Transverse colon (tissue), 4 donors: ENCODE measurements at regions of chr5 and their contacts with region 1.

Region 1: DNA sequence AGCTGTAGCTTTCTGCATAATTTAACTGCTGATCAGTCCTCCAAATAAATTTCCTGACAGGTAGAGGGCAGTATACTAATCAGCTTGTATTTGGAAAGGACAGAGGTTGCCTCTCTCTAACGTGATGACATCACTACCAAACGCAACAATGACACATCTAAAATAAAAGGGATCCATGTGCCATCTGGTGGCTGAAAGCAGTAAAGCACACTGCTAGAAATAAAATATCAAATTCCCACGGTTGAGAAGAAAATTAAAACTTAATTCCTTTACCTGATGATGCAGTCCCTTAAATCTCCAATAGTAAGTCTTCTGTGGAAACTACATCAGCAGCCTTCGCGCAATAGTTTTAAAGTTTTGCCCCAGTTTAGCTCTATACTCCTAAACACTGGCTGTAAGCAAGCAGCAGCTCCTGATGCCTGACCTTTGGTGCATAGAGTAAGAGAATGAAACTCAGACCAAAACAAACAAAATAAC is 54.5 kb downstream of the DIAPH1 start:
- DNase-seq: peak; percentile 59
- H3K4me3 ChIP-seq: no peak overlapping the region
- H3K27ac ChIP-seq: peak overlapping the region; percentile 27 to 64 (median 61)
- H3K4me1 ChIP-seq: peaks cover 6 to 24% (median 15%) of the 10 kb centered on the region in 4 donors
- H3K27me3 ChIP-seq: no peaks in the 10 kb centered on the region
- CTCF ChIP-seq: peak; percentile 90 to 99 (median 92)
- EP300 ChIP-seq: no peak
- POLR2A ChIP-seq: no peak

Region 2: DNA sequence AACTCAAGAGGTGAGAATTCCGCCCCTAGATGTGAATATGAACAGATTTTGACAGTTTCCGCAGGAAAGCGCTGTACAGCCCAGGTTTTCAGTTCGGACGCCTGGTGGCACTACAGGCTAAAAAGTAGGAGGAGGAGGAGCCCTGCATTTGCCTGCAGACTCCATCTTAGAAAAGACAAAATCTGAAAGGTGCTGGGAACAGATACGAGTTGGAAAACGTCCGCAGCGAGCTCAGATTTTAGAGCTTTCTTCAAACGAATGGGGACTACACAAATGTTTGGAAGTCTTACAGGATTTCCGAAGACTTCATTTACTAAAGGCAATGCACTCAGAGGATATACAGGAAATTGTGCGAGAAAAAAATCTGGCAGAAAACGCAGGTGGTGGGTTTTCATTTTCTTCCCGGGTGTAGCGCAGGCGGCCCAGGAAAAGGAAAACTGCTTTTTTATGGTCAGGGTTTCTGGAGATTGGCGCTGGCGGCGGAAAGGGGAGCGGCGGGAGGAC is 479.7 kb before region 1 on chr5:
- in situ Hi-C with region 1: loop called in 1 of 4 experiments (anchors 25 kb)
- intact Hi-C with region 1: no loop called
- DNase-seq: peak; percentile 18
- H3K4me3 ChIP-seq: peak overlapping the region in 3 of 4 donors; percentile 21 to 36 (median 29)
- H3K27ac ChIP-seq: peak overlapping the region in 3 of 4 donors; percentile 44 to 67 (median 57)
- H3K4me1 ChIP-seq: no peaks in the 10 kb centered on the region
- H3K27me3 ChIP-seq: peaks cover 4% of the 10 kb centered on the region
- CTCF ChIP-seq: peak in 4 of 5 experiments; percentile 21 to 35 (median 27)
- EP300 ChIP-seq: no peak
- POLR2A ChIP-seq: no peak

Region 3: GRCh38 chr5:141223112-141223783 is 341.0 kb before region 1 on chr5 and contains the start of gene PCDHB14:
- in situ Hi-C with region 1: loop called (anchors 25 kb)
- intact Hi-C with region 1: no loop called
- DNase-seq: no peak
- H3K4me3 ChIP-seq: peak within 1 kb of the TSS in 1 of 4 donors; percentile 28
- H3K27ac ChIP-seq: no peak within 1 kb of the TSS
- H3K4me1 ChIP-seq: peaks cover 0 to 2% (median 0%) of the 10 kb centered on the region in 4 donors
- H3K27me3 ChIP-seq: no peaks in the 10 kb centered on the region
- CTCF ChIP-seq: peak in 2 of 5 experiments; percentile 6 to 16
- EP300 ChIP-seq: no peak
- POLR2A ChIP-seq: no peak
- total RNA-seq, gene PCDHB14: 1.4 to 3.3 (median 2.8) TPM

Region 4: DNA sequence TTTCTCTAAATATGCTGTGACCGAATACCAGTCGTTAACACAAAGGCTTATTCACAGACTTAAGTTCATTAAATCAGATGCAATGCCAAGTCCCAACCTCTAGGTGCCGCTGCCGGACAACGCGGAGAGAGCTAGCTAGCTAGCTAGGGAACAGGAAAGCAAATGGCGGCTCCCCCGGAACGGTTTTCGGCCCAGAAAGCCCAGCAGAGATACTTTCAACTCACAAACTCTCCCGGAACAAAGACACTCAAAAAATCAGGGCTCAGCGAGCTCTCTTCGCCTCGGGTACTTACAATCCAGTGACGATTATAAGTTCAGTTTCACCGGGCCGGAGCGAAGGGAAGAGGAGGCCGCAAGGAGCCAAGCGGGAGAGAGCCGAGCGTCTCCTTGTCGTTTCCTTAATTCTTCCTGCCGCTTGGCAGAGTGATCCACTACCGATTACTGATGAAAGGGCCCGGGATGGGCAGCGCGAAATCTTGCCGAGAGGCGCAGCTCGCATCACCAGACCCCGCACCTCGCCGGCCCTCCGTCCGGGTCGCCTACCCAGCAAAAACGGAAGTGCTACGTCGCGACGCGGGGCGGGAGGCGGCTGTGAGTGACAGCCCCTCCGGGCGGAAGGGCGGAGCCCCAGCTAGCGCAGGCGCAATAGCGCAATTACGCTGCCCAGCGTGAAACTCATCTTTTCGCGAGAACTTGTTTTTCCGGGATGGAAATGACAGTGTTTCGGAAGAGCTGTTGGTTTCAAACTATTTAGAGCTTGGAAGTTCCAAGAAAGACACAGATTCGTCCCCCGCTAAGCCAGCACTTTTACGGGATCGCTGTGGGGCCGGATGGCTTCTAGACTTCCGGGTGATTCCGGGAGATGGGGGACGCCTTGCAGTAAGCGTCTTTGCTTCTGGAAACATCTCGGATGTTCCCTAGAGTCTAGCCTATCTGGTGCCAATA is 243.8 kb before region 1 on chr5 and contains the start of gene TAF7:
- in situ Hi-C with region 1: loop called in 1 of 4 experiments (anchors 25 kb)
- intact Hi-C with region 1: loop called (anchors 10 kb)
- DNase-seq: peak; percentile 92
- H3K4me3 ChIP-seq: peak within 1 kb of the TSS; percentile 32 to 80 (median 62)
- H3K27ac ChIP-seq: peak within 1 kb of the TSS; percentile 87 to 97 (median 92)
- H3K4me1 ChIP-seq: peaks cover 0 to 12% (median 4%) of the 10 kb centered on the region in 4 donors
- H3K27me3 ChIP-seq: no peaks in the 10 kb centered on the region
- CTCF ChIP-seq: peak; percentile 79 to 86 (median 85)
- EP300 ChIP-seq: no peak
- POLR2A ChIP-seq: peak; percentile 95
- total RNA-seq, gene TAF7: 41.9 to 62.5 (median 50.3) TPM

Region 5: GRCh38 chr5:141349917-141350619 is 214.2 kb before region 1 on chr5 and contains the start of gene PCDHGB1:
- in situ Hi-C with region 1: loop called in 1 of 4 experiments (anchors 25 kb)
- intact Hi-C with region 1: no loop called
- DNase-seq: peak; percentile 20
- H3K4me3 ChIP-seq: peak within 1 kb of the TSS in 1 of 4 donors; percentile 33
- H3K27ac ChIP-seq: no peak within 1 kb of the TSS
- H3K4me1 ChIP-seq: no peaks in the 10 kb centered on the region
- H3K27me3 ChIP-seq: peaks cover 15% of the 10 kb centered on the region
- CTCF ChIP-seq: peak in 2 of 5 experiments; percentile 15 to 41
- EP300 ChIP-seq: no peak
- POLR2A ChIP-seq: no peak
- total RNA-seq, gene PCDHGB1: 0.96 to 10.5 (median 3.4) TPM

Region 6: DNA sequence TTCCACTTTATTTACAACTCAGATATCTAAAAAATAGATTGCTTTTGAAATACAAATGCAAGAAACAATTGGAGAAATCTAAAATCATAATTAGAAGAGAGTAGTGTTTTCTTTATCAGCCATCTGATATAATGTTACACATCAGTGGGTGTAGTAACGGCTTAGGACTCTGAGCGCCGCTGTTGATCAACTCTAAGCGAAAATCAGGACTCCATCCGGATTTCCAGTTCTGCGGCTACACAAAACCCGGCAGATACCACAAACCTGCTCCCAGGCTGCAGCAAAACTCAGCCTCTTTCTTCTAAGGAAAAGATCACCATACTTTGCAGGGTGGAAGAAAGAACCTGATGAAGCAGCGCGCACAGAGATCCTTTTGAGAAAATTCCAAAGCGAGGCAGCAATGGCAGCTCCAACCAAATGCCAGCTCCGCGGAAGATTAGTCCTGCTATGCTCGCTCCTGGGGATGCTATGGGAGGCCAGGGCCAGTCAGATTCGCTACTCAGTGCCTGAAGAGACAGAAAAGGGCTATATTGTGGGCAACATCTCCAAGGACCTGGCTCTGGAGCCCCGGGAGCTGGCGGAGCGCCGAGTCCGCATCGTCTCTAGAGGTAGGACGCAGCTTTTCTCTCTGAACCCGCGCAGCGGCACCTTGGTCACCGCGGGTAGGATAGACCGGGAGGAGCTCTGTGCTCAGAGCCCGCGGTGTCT is 161.5 kb before region 1 on chr5 and contains the start of gene PCDHGA9:
- in situ Hi-C with region 1: loop called in 1 of 4 experiments (anchors 10 kb)
- intact Hi-C with region 1: no loop called
- DNase-seq: no peak
- H3K4me3 ChIP-seq: peak within 1 kb of the TSS in 1 of 4 donors; percentile 32
- H3K27ac ChIP-seq: no peak within 1 kb of the TSS
- H3K4me1 ChIP-seq: no peaks in the 10 kb centered on the region
- H3K27me3 ChIP-seq: peaks cover 26% of the 10 kb centered on the region
- CTCF ChIP-seq: peak in 3 of 5 experiments; percentile 12 to 19 (median 19)
- EP300 ChIP-seq: no peak
- POLR2A ChIP-seq: no peak
- total RNA-seq, gene PCDHGA9: 1.2 to 4.6 (median 3.4) TPM

Region 7: DNA sequence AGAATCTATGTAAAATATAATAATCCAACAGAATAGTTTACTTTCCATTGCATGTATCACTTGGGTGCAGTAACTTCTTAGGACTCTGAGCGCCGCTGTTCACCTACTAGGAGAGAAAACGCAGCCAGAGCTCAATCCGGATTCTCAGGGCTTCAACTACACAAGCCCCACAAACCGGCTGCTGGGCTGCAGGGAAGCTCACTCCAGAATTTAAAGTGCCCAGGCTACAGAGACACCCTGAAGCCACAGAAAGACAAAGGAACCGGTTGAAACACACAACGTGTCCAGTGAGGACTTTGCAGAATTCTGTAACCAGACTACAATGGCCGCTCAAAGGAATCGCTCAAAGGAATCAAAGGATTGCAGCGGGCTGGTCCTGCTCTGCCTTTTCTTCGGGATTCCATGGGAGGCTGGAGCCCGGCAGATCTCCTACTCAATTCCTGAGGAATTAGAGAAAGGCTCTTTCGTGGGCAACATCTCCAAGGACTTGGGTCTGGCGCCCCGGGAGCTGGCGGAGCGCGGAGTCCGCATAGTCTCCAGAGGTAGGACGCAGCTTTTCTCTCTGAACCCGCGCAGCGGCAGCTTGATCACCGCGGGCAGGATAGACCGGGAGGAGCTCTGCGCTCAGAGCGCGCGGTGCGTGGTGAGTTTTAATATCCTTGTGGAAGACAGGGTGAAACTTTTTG is 151.3 kb before region 1 on chr5 and contains the start of gene PCDHGA10:
- in situ Hi-C with region 1: loop called in 2 of 4 experiments (anchors 10 kb)
- intact Hi-C with region 1: loop called (anchors 10 kb)
- DNase-seq: peak; percentile 62
- H3K4me3 ChIP-seq: peak within 1 kb of the TSS in 3 of 4 donors; percentile 16 to 44 (median 18)
- H3K27ac ChIP-seq: peak within 1 kb of the TSS in 1 of 4 donors; percentile 2
- H3K4me1 ChIP-seq: no peaks in the 10 kb centered on the region
- H3K27me3 ChIP-seq: peaks cover 8% of the 10 kb centered on the region
- CTCF ChIP-seq: peak; percentile 23 to 54 (median 41)
- EP300 ChIP-seq: no peak
- POLR2A ChIP-seq: no peak
- total RNA-seq, gene PCDHGA10: 4.0 to 6.5 (median 6.1) TPM

Region 8: DNA sequence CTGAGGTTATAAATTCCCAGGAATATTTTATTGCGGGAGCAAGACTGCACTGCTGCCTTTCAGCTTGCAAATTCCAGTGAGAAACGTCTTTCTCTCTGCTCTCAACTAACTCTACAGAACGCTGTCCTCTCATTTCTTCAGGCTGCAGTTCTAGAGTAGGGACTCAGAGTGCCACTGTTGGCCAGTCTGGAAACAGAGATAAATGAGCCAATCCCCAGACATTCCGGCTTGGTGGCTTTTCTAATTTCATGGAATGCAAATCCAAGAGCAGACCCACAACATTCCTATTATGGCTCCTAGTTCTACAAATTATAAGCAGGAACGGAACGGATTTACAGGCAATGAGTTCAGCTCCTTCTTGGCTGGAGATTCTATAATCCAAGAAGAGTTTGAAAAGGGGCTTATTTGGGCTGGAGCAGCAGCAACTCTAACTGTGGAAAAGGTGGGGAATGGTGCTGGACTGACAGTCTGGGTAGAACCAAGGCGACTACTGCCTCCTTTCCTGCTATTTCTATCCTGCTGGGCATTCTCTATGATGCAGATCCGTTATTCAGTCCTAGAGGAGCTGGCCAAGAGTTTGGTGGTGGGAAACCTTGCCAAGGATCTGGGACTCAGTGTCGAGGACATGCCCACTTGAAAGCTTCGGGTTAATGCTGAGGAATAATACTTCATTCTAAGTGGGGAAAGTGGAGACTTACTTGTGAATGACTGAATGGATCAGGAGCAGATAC is 124.7 kb before region 1 on chr5:
- in situ Hi-C with region 1: no loop called
- intact Hi-C with region 1: no loop called
- DNase-seq: no peak
- H3K4me3 ChIP-seq: no peak overlapping the region
- H3K27ac ChIP-seq: no peak overlapping the region
- H3K4me1 ChIP-seq: no peaks in the 10 kb centered on the region
- H3K27me3 ChIP-seq: no peaks in the 10 kb centered on the region
- CTCF ChIP-seq: no peak
- EP300 ChIP-seq: no peak
- POLR2A ChIP-seq: no peak